Activated naive CD4-positive, alpha-beta T cell treated with anti-CD3 and anti-CD28 coated beads for 36 hours (primary cell): ENCODE measurements at regions of chr4 and their contacts with region 1.

Region 1: GRCh38 chr4:189090174-189090814 is 850.4 kb upstream of the FRG1 start:
- DNase-seq: no peak
- H3K4me3 Mint-ChIP-seq: no peak overlapping the region
- H3K27ac Mint-ChIP-seq: no peak overlapping the region
- H3K4me1 Mint-ChIP-seq: no peaks in the 10 kb centered on the region
- H3K27me3 Mint-ChIP-seq: no peaks in the 10 kb centered on the region

Region 2: GRCh38 chr4:189029976-189030504 is 60.3 kb before region 1 on chr4:
- CTCF ChIA-PET with region 1: no interaction called
- intact Hi-C with region 1: loop called (anchors 10 kb)
- DNase-seq: no peak
- H3K4me3 Mint-ChIP-seq: no peak overlapping the region
- H3K27ac Mint-ChIP-seq: no peak overlapping the region
- H3K4me1 Mint-ChIP-seq: no peaks in the 10 kb centered on the region
- H3K27me3 Mint-ChIP-seq: no peaks in the 10 kb centered on the region